Right cardiac atrium (tissue), 5 donors: ENCODE measurements at regions of chr3 and their contacts with region 1.

Region 1: GRCh38 chr3:10224784-10225665 is 23.2 kb upstream of the TATDN2 start:
- DNase-seq: peak; percentile 63 to 85 (median 84)
- ATAC-seq: peak; percentile 89 to 91
- H3K4me3 ChIP-seq: no peak overlapping the region
- H3K27ac ChIP-seq: no peak overlapping the region
- H3K4me1 ChIP-seq: no peaks in the 10 kb centered on the region
- H3K27me3 ChIP-seq: no peaks in the 10 kb centered on the region

Region 2: GRCh38 chr3:10164546-10165393 is 60.3 kb before region 1 on chr3 and contains the start of gene IRAK2:
- intact Hi-C with region 1: loop called in 3 of 4 experiments (anchors 2 to 10 kb)
- DNase-seq: peak; percentile 80 to 91 (median 89)
- ATAC-seq: peak; percentile 96 to 97
- H3K4me3 ChIP-seq: peak within 1 kb of the TSS; percentile 55
- H3K27ac ChIP-seq: no peak within 1 kb of the TSS
- H3K4me1 ChIP-seq: no peaks in the 10 kb centered on the region
- H3K27me3 ChIP-seq: no peaks in the 10 kb centered on the region
- total RNA-seq, gene IRAK2: 0.71 to 1.5 (median 1.4) TPM